ENCODE measurements at regions of chr16 and their contacts with region 1.

Region 1: DNA sequence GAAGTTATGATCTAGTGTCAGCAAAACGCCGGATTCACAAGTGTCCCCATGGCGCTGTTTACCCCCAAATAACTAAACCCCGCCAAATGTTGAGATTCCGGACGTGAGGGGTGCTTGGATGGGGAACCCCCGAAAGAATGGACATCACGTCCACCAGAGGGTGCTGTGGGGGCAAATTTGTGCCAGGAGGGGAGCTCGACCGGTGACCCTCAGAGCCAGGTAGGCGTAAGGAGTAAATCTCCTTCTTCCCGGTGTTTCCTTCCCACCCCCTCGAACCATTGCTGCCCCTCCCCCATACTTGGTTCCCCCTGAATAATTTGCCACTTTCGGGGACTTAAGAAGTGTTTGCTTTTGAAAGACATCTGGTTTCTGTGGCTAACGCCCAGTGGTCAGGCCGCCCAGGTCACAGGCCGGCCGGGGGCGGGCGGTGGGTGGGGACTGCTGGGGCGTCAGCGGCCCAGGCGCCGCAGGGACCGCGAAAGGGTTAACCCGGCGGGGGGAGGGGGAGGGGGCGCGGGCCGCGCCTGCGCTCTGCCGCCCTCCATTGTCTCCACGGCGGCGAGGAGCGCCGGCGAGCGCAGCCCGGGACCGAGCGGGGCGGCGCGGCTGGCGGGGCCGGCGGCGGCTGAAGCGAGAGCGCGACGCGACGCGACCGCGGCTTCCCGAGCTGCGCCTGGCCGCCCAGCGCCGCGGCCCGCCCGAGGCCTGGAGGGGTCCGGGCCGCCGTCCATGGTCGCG is at the start of gene ZNRF1:
- DNase-seq: peak; percentile 93
- H3K4me3 ChIP-seq: peak within 1 kb of the TSS; percentile 51 to 85 (median 66)
- H3K27ac ChIP-seq: peak within 1 kb of the TSS in 7 of 8 donors; percentile 38 to 83 (median 59)
- H3K4me1 ChIP-seq: peaks cover 13 to 47% (median 27%) of the 10 kb centered on the region in 6 donors
- H3K27me3 ChIP-seq: peaks cover 0 to 40% (median 17%) of the 10 kb centered on the region in 7 donors
- CTCF ChIP-seq: peak; percentile 46 to 85 (median 78)
- POLR2A ChIP-seq: no peak
- total RNA-seq, gene ZNRF1: 3.7 to 13.4 (median 8.9) TPM

Region 2: DNA sequence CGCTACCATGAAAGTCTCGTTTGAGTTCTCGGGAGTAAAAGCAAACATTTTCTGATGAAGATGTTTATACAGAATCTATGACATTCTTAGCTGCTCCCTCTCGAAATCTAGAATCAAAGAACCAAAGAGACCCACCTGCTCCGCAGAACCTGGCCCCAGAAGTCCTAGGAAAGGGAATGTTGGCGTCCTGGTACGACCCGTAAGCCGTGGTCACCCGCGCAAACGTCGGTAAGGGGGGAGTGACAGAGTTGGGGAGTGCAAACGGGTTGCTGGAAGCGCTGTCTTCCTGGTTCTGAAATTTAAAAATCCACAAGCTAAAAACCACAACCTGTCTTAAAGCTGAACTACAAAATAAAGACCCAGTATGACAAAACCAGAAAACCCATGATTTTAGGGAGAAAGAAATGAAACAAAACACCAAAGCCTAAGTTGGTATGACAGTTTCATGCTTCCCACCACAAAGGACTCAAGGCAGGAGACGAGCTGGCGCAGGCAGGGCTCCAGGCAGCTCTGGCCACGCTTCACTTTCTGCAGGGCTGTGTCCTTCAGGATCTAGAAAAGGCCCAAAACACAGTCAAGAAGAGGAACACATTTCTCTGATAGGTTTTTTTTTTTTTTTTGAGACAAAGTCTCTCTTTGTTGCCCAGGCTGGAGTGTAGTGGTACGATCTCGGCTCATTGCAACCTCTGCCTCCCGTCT is 89.1 kb before region 1 on chr16:
- intact Hi-C with region 1: no loop called
- DNase-seq: no peak
- H3K4me3 ChIP-seq: no peak overlapping the region
- H3K27ac ChIP-seq: no peak overlapping the region
- H3K4me1 ChIP-seq: no peaks in the 10 kb centered on the region
- H3K27me3 ChIP-seq: no peaks in the 10 kb centered on the region
- CTCF ChIP-seq: no peak
- POLR2A ChIP-seq: no peak

Region 3: GRCh38 chr16:74942977-74943918 is 55.4 kb before region 1 on chr16:
- intact Hi-C with region 1: no loop called
- DNase-seq: no peak
- H3K4me3 ChIP-seq: no peak overlapping the region
- H3K27ac ChIP-seq: no peak overlapping the region
- H3K4me1 ChIP-seq: no peaks in the 10 kb centered on the region
- H3K27me3 ChIP-seq: no peaks in the 10 kb centered on the region
- CTCF ChIP-seq: no peak
- POLR2A ChIP-seq: no peak

Region 4: GRCh38 chr16:75105306-75106061 is 106.8 kb after region 1 on chr16:
- intact Hi-C with region 1: loop called (anchors 2 kb)
- DNase-seq: peak; percentile 78
- H3K4me3 ChIP-seq: no peak overlapping the region
- H3K27ac ChIP-seq: peak overlapping the region in 6 of 8 donors; percentile 52 to 85 (median 72)
- H3K4me1 ChIP-seq: peaks cover 10 to 67% (median 36%) of the 10 kb centered on the region in 6 donors
- H3K27me3 ChIP-seq: peaks cover 0 to 86% (median 0%) of the 10 kb centered on the region in 7 donors
- CTCF ChIP-seq: no peak
- POLR2A ChIP-seq: no peak

Region 5: GRCh38 chr16:75406945-75407344 is 408.3 kb after region 1 on chr16:
- intact Hi-C with region 1: no loop called
- DNase-seq: no peak
- H3K4me3 ChIP-seq: no peak overlapping the region
- H3K27ac ChIP-seq: no peak overlapping the region
- H3K4me1 ChIP-seq: peaks cover 0 to 20% (median 7%) of the 10 kb centered on the region in 6 donors
- H3K27me3 ChIP-seq: no peaks in the 10 kb centered on the region
- CTCF ChIP-seq: no peak
- POLR2A ChIP-seq: no peak

Region 6: GRCh38 chr16:76201385-76201784 is 1202.7 kb after region 1 on chr16:
- intact Hi-C with region 1: no loop called
- DNase-seq: no peak
- H3K4me3 ChIP-seq: no peak overlapping the region
- H3K27ac ChIP-seq: no peak overlapping the region
- H3K4me1 ChIP-seq: no peaks in the 10 kb centered on the region
- H3K27me3 ChIP-seq: no peaks in the 10 kb centered on the region
- CTCF ChIP-seq: no peak
- POLR2A ChIP-seq: no peak